ENCODE measurements at regions of chr4 and their contacts with region 1.

Region 1: GRCh38 chr4:54217642-54218495 is 11.2 kb upstream of the PDGFRA start:
- DNase-seq: peak; percentile 27 to 79 (median 42)
- ATAC-seq: peak; percentile 57
- H3K4me3 ChIP-seq: no peak overlapping the region
- H3K4me3 Mint-ChIP-seq: no peak overlapping the region
- H3K27ac ChIP-seq: no peak overlapping the region
- H3K27ac Mint-ChIP-seq: no peak overlapping the region
- H3K4me1 ChIP-seq: peaks cover 6% of the 10 kb centered on the region
- H3K4me1 Mint-ChIP-seq: peaks cover 3% of the 10 kb centered on the region
- H3K27me3 ChIP-seq: peaks cover 13 to 16% of the 10 kb centered on the region in 2 experiments
- H3K27me3 Mint-ChIP-seq: peaks cover 55% of the 10 kb centered on the region
- CTCF ChIP-seq: peak; percentile 83

Region 2: DNA sequence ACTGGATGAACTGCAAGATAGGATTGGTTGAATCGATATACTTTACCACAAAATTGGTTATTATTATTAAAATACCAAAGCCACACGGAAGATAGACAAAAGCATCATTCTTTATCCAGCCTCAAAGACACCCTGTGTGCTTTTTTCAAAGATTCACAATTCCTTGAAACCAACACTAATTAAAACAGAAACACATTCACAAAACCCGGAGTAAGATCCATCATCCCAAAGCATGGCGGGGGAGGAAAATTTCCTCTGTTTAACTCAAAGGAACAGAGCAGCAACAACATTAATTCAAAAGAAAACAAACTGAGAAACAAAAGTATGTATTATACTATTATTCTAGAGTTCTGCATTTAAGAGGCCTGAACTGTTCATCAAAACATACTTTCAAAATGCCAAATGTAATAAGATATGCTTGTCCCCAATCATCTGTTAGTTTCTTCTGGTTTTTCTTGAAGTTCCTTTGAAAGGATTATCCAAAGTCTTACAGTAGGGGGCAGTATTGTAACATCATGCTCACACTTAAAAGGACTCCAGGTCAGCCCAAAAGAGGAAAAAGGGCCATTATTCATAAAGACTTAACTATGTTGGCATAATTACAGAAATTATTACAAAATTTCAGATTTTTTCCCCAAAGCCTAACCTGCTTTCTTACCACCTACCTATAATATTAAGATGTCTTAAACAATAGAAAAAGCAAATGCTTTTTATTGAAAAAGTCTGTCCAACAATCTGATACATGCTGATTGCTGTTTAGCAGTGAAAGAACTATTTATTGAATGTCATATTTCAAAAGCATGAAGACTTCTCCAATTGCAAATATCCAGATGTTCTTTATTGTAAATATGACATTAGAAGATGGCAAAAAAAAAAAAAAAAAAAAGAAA is 1020.7 kb before region 1 on chr4:
- CTCF ChIA-PET with region 1: interaction called, 3 read pairs
- POLR2A ChIA-PET with region 1: no interaction called
- intact Hi-C with region 1: loop called in 1 of 2 experiments (anchors 2 kb)
- DNase-seq: peak in 3 of 14 experiments; percentile 64 to 72 (median 71)
- ATAC-seq: no peak
- H3K4me3 ChIP-seq: no peak overlapping the region
- H3K4me3 Mint-ChIP-seq: no peak overlapping the region
- H3K27ac ChIP-seq: no peak overlapping the region
- H3K27ac Mint-ChIP-seq: no peak overlapping the region
- H3K4me1 ChIP-seq: no peaks in the 10 kb centered on the region
- H3K4me1 Mint-ChIP-seq: no peaks in the 10 kb centered on the region
- H3K27me3 ChIP-seq: no peaks in the 10 kb centered on the region
- H3K27me3 Mint-ChIP-seq: no peaks in the 10 kb centered on the region
- CTCF ChIP-seq: peak; percentile 74

Region 3: GRCh38 chr4:53929955-53930798 is 287.7 kb before region 1 on chr4:
- CTCF ChIA-PET with region 1: interaction called, 12 read pairs
- POLR2A ChIA-PET with region 1: no interaction called
- intact Hi-C with region 1: loop called (anchors 1 kb)
- DNase-seq: peak; percentile 25 to 76 (median 38)
- ATAC-seq: no peak
- H3K4me3 ChIP-seq: no peak overlapping the region
- H3K4me3 Mint-ChIP-seq: no peak overlapping the region
- H3K27ac ChIP-seq: no peak overlapping the region
- H3K27ac Mint-ChIP-seq: no peak overlapping the region
- H3K4me1 ChIP-seq: no peaks in the 10 kb centered on the region
- H3K4me1 Mint-ChIP-seq: no peaks in the 10 kb centered on the region
- H3K27me3 ChIP-seq: peaks cover 0 to 3% of the 10 kb centered on the region in 2 experiments
- H3K27me3 Mint-ChIP-seq: peaks cover 11% of the 10 kb centered on the region
- CTCF ChIP-seq: peak; percentile 79

Measured in CD4-positive, alpha-beta T cell (primary cell).